ENCODE measurements at regions of chr6 and their contacts with region 1.

Region 1: DNA sequence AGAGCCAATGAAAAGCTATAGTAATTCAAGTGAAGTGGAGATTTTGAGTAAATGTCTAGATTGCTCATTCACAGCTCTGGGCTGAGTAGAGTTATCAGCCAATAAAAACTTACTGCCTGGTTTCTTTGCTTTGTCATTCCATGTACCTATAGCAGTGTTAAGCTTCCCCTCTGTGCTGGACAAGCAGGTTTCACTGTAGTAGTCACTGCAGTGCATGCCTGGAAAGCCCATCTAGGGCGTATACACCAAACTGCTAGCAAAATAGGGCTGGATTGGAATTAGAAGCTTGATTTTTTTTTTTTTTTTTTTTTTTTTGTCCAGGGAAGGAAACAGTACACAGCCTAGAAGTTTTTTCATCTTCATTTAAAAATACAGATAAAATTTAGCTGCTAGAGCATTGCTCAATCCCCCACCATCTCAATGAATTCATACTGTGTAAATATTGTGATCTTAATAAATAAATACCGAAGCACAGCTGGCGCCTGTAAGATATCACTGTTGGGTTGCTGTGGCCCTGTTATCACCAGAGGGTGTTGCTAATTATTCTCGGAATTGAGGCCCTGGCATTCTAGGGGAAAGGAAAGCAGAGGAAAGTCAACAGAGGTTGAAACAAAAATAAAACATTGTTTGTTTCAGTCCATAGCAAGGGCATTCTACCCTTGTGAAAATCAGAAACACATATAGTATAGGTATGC is 968.5 kb upstream of the GJE1 start:
- DNase-seq: peak in 1 of 2 donors; percentile 59
- ATAC-seq: peak; percentile 78 to 96 (median 93)
- H3K4me3 ChIP-seq: no peak overlapping the region
- H3K27ac ChIP-seq: peak overlapping the region; percentile 67 to 93 (median 82)
- H3K4me1 ChIP-seq: peaks cover 0 to 29% (median 12%) of the 10 kb centered on the region in 9 donors
- H3K27me3 ChIP-seq: no peaks in the 10 kb centered on the region
- CTCF ChIP-seq: no peak

Region 2: DNA sequence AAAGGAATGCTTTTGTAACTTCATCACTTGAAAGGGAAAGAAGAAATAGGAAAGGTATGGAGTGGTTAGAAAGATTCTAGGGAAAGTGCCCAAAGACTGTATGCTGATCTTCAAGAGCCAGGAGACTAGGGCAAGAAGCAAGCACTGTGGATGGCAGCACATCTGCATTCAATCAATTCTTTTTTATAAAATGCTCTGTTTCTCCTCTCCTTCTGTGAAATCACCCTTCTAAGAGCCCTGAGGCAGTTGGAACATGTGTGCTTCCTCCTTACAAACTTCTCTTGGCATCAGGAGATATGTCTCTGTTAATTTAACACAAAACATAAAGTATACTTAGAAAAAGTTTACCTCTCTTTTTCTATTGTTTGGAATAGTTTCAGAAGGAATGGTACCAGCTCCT is 193.7 kb before region 1 on chr6:
- intact Hi-C with region 1: no loop called
- DNase-seq: no peak
- ATAC-seq: no peak
- H3K4me3 ChIP-seq: no peak overlapping the region
- H3K27ac ChIP-seq: no peak overlapping the region
- H3K4me1 ChIP-seq: no peaks in the 10 kb centered on the region
- H3K27me3 ChIP-seq: no peaks in the 10 kb centered on the region
- CTCF ChIP-seq: no peak

Region 3: GRCh38 chr6:141413196-141413595 is 249.0 kb after region 1 on chr6:
- intact Hi-C with region 1: loop called in 1 of 10 experiments (anchors 5 kb)
- DNase-seq: no peak
- ATAC-seq: peak in 6 of 8 donors; percentile 58 to 89 (median 74)
- H3K4me3 ChIP-seq: peak overlapping the region in 1 of 10 donors; percentile 18
- H3K27ac ChIP-seq: peak overlapping the region in 9 of 10 donors; percentile 17 to 70 (median 45)
- H3K4me1 ChIP-seq: peaks cover 0 to 14% (median 0%) of the 10 kb centered on the region in 9 donors
- H3K27me3 ChIP-seq: no peaks in the 10 kb centered on the region
- CTCF ChIP-seq: no peak